PC-9 (cell line): ENCODE measurements at regions of chr1 and their contacts with region 1.

Region 1: DNA sequence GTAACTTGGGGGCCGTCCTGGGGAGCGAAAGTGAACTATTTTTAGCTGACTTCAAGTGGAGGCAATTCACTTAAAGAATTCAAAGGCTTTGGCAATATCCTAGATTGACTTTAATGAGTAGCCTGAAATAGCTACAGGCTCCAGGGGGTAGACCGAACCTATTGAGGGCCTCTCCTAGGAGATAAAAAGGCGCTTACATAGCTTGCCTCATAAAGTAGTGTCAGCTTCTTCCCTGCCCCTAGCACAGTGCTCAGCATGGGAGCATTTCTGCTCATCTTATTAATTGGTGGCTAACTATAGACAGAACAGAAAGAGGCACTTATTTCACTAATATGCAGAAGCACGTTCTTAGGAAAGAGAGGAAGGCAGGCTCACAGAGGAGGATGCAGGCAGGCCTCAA is 12.3 kb upstream of the CTNNBIP1 start:
- DNase-seq: no peak
- H3K4me3 ChIP-seq: no peak overlapping the region
- H3K27ac ChIP-seq: no peak overlapping the region
- H3K4me1 ChIP-seq: no peaks in the 10 kb centered on the region
- H3K27me3 ChIP-seq: no peaks in the 10 kb centered on the region
- CTCF ChIP-seq: no peak

Region 2: GRCh38 chr1:9629445-9630201 is 292.7 kb before region 1 on chr1:
- CTCF ChIA-PET with region 1: no interaction called
- POLR2A ChIA-PET with region 1: interaction called, 16 read pairs
- intact Hi-C with region 1: no loop called
- DNase-seq: no peak
- H3K4me3 ChIP-seq: no peak overlapping the region
- H3K27ac ChIP-seq: no peak overlapping the region
- H3K4me1 ChIP-seq: no peaks in the 10 kb centered on the region; the same call in 1 of the 2 replicates
- H3K27me3 ChIP-seq: no peaks in the 10 kb centered on the region
- CTCF ChIP-seq: no peak

Region 3: GRCh38 chr1:10170239-10170574 is 247.9 kb after region 1 on chr1:
- CTCF ChIA-PET with region 1: no interaction called
- POLR2A ChIA-PET with region 1: interaction called, 11 read pairs
- intact Hi-C with region 1: no loop called
- DNase-seq: peak in 1 of 2 experiments; percentile 48
- H3K4me3 ChIP-seq: no peak overlapping the region
- H3K27ac ChIP-seq: peak overlapping the region; percentile 31; the same call in 1 of the 2 replicates
- H3K4me1 ChIP-seq: no peaks in the 10 kb centered on the region
- H3K27me3 ChIP-seq: no peaks in the 10 kb centered on the region
- CTCF ChIP-seq: no peak